H1 (cell line): ENCODE measurements at regions of chr14 and their contacts with region 1.

Region 1: GRCh38 chr14:89936658-89937185 is 17.8 kb downstream of the EFCAB11 start:
- DNase-seq: no peak
- H3K4me3 ChIP-seq: no peak overlapping the region
- H3K27ac ChIP-seq: no peak overlapping the region
- H3K4me1 ChIP-seq: peaks cover 0 to 9% (median 0%) of the 10 kb centered on the region in 4 experiments; a peak in 1 of 7 replicates
- H3K27me3 ChIP-seq: no peaks in the 10 kb centered on the region
- CTCF ChIP-seq: no peak
- EP300 ChIP-seq: no peak
- POLR2A ChIP-seq: no peak
- RAD21 ChIP-seq: no peak

Region 2: DNA sequence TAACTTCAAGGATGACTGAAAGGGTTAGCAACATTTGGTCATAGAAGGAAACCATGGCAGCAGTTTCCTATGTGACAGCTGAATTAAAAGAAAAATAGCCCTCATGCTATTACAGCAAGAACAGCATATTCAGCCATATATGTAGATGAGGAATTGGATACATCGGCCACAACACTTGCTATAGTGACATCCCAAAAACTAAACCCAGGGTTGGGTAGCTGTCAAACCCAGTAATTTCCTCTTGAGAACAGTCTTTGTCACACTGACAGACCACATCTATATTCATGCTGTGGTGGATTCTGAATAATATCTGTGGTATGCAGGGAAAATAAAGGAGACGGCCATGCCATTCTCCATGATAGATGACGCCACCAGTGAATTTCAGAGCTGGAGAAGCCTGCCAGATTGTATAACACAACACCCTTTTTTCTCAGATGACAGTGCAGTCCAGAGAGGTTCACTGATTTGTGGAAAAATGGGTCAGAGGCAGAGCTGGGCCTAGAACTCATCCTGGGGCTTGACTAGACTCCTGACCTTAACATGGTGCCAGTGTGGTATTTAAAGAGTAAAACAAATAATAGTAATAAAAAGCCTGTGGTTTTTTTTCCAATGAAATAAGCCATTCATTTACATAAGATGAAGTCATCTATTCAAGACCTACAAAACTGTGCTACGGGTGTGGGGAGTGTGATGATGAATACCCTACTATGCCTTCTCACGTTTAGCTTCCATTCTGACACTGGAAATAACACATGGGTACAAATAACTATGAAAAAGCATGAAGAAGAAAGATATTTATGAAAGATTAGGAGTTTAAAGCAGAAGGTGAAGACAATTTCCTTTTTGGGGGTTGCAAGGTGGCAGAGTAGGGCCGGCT is 14.5 kb before region 1 on chr14:
- CTCF ChIA-PET with region 1: interaction called, 41 read pairs
- POLR2A ChIA-PET with region 1: interaction called, 5 read pairs
- DNase-seq: no peak
- H3K4me3 ChIP-seq: no peak overlapping the region
- H3K27ac ChIP-seq: no peak overlapping the region
- H3K4me1 ChIP-seq: no peaks in the 10 kb centered on the region; a peak in 1 of 7 replicates
- H3K27me3 ChIP-seq: no peaks in the 10 kb centered on the region
- CTCF ChIP-seq: no peak
- EP300 ChIP-seq: no peak
- POLR2A ChIP-seq: no peak
- RAD21 ChIP-seq: no peak

Region 3: DNA sequence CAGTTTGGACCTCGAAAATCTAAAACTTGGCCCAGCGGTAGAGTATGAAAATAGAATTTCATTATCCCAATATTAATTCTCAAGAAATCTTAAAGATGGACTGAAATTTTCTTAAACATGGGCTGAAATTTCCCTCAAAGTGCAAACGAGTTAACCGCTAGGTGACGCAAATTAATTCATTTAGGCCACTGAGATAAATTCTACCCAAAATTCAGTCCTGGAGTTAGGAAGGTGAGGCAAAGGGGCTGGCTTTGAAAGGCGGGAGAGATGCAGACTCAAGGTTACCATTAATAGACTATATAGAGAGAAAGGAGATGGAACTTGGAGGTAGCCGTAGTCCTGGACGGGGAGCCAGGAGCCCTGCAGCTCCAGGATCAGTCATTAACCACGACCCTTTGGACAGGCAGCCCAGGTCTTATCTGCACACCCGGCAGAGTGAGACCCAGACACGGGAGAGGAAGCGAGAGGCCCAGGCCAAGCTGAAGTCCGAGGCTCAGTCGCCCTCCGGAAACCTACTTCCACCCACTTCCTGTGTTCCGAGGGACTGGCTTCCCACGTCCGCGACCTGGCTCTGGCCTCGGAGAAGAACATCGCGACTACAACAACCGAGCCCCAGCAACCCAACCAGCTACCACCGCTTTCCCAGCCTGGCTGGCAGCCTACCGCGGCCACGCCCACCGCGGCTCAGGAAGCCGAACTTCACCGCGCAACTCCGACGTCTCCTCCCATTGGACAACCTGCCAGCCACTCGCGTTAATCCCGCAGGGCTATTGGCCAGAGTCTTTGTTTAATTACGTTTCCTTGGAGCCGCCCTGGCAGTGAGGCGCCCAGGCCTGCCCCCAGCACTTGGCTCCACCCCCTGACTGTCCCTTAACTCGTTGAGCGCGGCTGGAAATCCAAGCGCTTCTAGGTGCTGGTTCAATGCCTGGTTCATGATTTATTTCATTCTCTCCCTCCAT is 17.6 kb after region 1 on chr14 and contains the start of gene EFCAB11:
- CTCF ChIA-PET with region 1: interaction called, 35 read pairs
- POLR2A ChIA-PET with region 1: interaction called, 12 read pairs
- DNase-seq: peak; percentile 93 to 96
- H3K4me3 ChIP-seq: peak within 1 kb of the TSS; percentile 80 to 92 (median 86)
- H3K27ac ChIP-seq: peak within 1 kb of the TSS; percentile 73
- H3K4me1 ChIP-seq: peaks cover 0 to 3% (median under 1%) of the 10 kb centered on the region in 4 experiments; a peak in 3 of 7 replicates
- H3K27me3 ChIP-seq: no peaks in the 10 kb centered on the region
- CTCF ChIP-seq: peak in 2 of 3 experiments; percentile 2 to 18; a peak in 1 of 4 replicates
- EP300 ChIP-seq: no peak
- POLR2A ChIP-seq: peak; percentile 55 to 82
- RAD21 ChIP-seq: no peak
- total RNA-seq, gene EFCAB11: 12.8 and 15.4 TPM in 2 replicates